Mammary epithelial cell (primary cell): ENCODE measurements at regions of chr15 and their contacts with region 1.

Region 1: DNA sequence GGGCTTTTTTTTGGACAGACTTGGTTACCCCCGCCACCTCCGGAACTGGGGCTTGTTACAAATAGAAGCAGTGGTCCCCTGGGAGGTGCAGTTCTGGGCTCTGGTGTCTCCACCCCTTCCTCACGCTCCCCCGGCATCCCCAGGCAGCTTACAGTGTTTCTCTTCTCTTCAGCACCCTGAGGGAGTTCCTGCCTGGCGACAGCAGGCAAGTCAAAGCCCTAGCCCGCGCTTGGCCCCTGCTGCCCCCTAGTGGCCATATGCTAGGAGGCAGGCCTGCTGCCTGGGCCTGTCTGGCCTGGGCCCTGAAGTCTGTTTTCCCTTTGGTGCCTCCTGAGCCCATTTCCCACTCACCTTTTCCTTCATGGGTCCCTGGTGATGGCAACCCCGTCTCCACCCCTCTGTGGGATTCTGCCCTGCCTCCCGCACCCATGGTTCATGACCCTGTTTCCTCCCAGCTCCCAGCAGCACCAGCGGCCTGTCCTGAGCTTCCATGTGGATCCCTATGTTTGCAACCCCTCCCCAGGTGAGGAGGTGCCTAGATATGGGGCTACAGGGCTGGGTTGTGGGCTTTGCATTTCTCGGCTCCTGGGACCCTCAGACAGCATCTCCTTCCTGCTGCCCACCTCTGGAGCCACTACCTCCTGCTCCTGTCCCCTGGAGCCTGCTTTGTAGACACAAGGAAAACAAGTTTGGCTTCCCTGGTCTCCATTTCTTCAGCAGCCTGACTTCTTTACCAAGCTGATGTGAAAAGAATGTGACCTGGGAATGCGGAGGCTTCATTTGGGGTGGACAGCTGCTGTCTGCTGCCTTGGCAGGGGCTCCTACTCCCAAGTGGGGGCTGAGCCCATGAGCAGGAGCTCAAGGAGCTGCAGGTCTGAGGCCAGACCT is 2.2 kb downstream of the SNX22 start:
- DNase-seq: peak; percentile 72
- H3K4me3 ChIP-seq: no peak overlapping the region
- H3K27ac ChIP-seq: no peak overlapping the region
- H3K4me1 ChIP-seq: peaks cover 15% of the 10 kb centered on the region
- H3K27me3 ChIP-seq: peaks cover 4% of the 10 kb centered on the region
- CTCF ChIP-seq: peak; percentile 99

Region 2: GRCh38 chr15:63610200-63610841 is 543.4 kb before region 1 on chr15:
- CTCF ChIA-PET with region 1: interaction called, 4 read pairs
- dilution Hi-C with region 1: no loop called
- in situ Hi-C with region 1: no loop called
- intact Hi-C with region 1: loop called (anchors 5 kb)
- DNase-seq: peak; percentile 67
- H3K4me3 ChIP-seq: no peak overlapping the region
- H3K27ac ChIP-seq: no peak overlapping the region
- H3K4me1 ChIP-seq: peaks cover under 1% of the 10 kb centered on the region
- H3K27me3 ChIP-seq: no peaks in the 10 kb centered on the region
- CTCF ChIP-seq: peak; percentile 81 to 85

Region 3: DNA sequence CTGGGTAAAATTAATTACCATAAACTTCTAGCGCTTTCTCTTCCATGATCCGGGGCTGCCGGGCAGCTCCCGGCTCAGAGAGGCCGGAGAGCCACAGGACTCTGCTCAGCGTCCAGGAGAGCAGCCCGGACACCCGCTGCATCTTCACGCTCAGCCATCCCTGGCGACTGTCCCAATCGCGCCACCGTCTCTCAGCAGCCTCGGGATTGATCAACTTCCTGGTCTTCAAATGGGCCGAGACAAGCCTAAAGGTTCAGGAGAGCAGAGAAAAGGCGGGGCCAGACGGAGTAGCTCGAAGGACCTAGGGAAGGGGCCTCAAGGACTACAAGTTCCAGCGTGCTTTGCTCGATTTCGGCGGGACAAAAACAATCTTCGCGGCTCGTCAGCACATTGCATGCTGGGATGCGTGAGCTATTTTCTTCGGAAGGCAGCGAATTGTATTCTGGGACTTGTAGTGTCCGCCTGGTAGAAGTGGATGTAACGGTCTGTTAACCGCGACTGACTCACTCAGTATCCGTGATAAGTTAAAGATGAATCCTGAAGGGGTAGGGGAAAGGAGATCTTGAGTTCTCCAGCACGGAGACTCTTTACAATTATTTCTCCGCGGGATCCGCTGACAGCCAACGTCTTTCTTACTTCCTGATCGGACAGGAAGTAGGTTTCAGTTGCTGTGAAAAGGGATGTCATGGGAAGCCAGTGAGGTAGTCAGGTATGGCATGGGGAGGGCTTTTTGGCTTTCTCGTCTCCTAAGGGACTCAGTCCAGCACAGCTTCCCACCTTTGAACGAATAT is 59.9 kb before region 1 on chr15 and contains the start of gene CIAO2A:
- CTCF ChIA-PET with region 1: interaction called, 7 read pairs
- dilution Hi-C with region 1: no loop called
- in situ Hi-C with region 1: no loop called
- intact Hi-C with region 1: loop called (anchors 1 kb)
- DNase-seq: peak; percentile 99
- H3K4me3 ChIP-seq: peak within 1 kb of the TSS; percentile 62 to 69 (median 67)
- H3K27ac ChIP-seq: peak within 1 kb of the TSS; percentile 64
- H3K4me1 ChIP-seq: peaks cover 29% of the 10 kb centered on the region
- H3K27me3 ChIP-seq: no peaks in the 10 kb centered on the region
- CTCF ChIP-seq: no peak
- total RNA-seq, gene CIAO2A: 31.8 to 47.0 TPM

Region 4: GRCh38 chr15:64455961-64456371 is 302.2 kb after region 1 on chr15:
- CTCF ChIA-PET with region 1: no interaction called
- dilution Hi-C with region 1: no loop called
- in situ Hi-C with region 1: no loop called
- intact Hi-C with region 1: no loop called
- DNase-seq: no peak
- H3K4me3 ChIP-seq: no peak overlapping the region
- H3K27ac ChIP-seq: no peak overlapping the region
- H3K4me1 ChIP-seq: peaks cover 8% of the 10 kb centered on the region
- H3K27me3 ChIP-seq: no peaks in the 10 kb centered on the region
- CTCF ChIP-seq: no peak